Heart left ventricle (tissue), 16 donors: ENCODE measurements at regions of chrX and their contacts with region 1.

Region 1: DNA sequence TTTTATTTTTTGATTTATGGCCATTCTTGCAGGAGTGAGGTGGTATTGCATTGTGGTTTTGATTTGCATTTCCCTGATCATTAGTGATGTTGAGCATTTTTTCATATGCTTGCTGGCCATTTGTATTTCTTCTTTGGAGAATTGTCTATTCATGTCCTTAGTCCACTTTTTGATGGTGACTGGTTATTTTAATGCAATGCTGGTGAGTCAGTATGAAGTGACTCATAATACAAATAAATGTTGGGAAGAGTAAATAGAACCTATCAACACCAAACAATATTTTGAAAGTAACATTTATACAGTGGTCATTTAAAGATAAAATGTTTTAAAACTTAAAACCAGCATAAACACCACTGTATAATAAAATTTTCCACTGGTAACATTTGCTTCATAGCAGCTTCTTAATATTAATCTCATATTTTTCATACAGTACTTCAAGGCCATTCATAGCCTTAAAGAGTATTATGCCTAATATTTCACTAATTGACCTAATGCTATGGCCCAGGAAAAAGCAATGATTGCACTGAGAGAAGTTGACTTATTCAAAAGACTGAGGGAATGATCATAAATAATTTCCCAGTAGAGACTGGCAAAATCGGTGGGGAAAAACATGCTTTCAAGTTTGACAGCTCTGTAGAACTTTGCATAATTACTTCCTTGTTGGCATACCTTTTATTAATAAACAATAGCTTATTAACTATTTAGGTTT is 33.9 kb downstream of the CASK start:
- DNase-seq: no peak
- ATAC-seq: no peak
- H3K4me3 ChIP-seq: no peak overlapping the region
- H3K27ac ChIP-seq: no peak overlapping the region
- H3K4me1 ChIP-seq: no peaks in the 10 kb centered on the region
- H3K27me3 ChIP-seq: no peaks in the 10 kb centered on the region
- CTCF ChIP-seq: no peak
- POLR2A ChIP-seq: no peak

Region 2: GRCh38 chrX:41837270-41837944 is 52.1 kb before region 1 on chrX:
- intact Hi-C with region 1: loop called in 1 of 10 experiments (anchors 10 kb)
- DNase-seq: no peak
- ATAC-seq: no peak
- H3K4me3 ChIP-seq: no peak overlapping the region
- H3K27ac ChIP-seq: no peak overlapping the region
- H3K4me1 ChIP-seq: no peaks in the 10 kb centered on the region
- H3K27me3 ChIP-seq: no peaks in the 10 kb centered on the region
- CTCF ChIP-seq: no peak
- POLR2A ChIP-seq: no peak

Region 3: DNA sequence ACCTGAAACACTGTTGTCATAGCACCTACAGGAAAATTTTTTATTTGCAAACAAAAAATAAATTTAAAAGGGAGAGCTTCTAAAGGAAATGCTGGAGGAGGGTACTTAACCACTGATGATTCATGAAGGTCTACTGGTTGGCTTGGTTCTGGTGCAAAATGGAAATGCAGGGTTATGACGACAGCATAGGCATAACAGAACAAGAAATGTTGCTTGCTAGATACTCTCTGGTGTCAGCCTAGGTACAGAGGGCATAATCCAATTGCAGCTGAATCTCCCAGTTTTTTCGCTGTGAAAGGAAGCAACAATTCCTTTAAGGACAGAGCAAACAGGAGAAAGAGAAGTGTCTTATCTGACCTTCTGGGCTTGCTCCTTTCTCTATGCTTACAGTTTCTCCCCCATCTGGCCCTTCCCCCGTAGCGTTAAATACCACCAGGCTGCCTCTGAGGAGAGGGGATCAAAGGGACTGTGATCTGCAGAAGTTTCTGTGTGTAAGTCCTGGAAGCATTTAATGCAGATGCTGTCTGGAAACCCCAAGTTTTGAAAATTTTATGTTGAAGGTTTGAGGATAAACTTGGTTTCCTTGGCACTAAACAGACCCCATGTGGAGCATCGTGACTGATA is 57.6 kb after region 1 on chrX:
- intact Hi-C with region 1: no loop called
- DNase-seq: no peak
- ATAC-seq: no peak
- H3K4me3 ChIP-seq: no peak overlapping the region
- H3K27ac ChIP-seq: no peak overlapping the region
- H3K4me1 ChIP-seq: no peaks in the 10 kb centered on the region
- H3K27me3 ChIP-seq: peaks cover 0 to 14% (median 0%) of the 10 kb centered on the region in 9 donors
- CTCF ChIP-seq: no peak
- POLR2A ChIP-seq: no peak